ENCODE measurements at regions of chr12 and their contacts with region 1.

Region 1: DNA sequence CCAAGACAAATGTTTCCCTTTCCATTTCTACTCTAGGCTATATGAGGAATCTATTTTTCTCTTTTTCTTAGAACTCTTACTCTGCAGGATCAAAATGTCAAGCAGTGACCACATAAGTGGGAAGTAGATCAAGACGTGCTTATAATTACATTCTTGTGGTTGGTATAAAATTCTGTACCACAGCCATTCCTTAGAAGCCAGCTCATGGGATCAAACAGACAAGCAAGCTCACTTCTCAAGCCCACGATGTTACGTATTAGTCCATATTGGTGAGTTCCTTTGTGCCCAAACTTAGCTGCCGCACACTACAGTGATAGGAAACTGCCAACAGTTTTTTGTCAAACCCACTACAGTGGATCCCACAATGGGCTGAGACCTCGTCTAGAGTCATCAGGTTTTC is 53.4 kb downstream of the IFNG start:
- DNase-seq: no peak
- H3K4me3 Mint-ChIP-seq: no peak overlapping the region
- H3K27ac Mint-ChIP-seq: no peak overlapping the region
- H3K4me1 Mint-ChIP-seq: peaks cover 9% of the 10 kb centered on the region
- H3K27me3 Mint-ChIP-seq: peaks cover 6% of the 10 kb centered on the region

Region 2: DNA sequence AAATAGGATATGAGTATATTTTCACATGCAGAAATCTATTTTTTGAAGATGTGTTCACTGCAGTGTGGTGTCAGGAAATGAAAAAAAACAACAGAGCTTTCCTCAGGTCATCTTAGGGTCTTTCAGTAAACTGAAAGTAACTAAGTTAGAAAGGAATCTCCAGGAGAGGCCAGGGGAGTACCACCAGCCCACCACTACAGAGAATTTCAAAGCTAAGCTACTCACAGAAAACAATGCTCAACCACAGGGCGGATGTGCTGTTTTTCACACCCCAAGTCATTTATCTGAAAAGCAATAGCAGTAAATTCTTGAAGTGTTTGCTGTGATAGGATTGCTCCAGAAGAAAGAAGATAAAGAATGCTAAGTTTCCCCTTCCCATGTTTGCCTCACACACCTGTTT is 25.6 kb before region 1 on chr12:
- intact Hi-C with region 1: loop called (anchors 1 kb)
- DNase-seq: peak; percentile 79
- H3K4me3 Mint-ChIP-seq: peak overlapping the region; percentile 59
- H3K27ac Mint-ChIP-seq: peak overlapping the region; percentile 84
- H3K4me1 Mint-ChIP-seq: peaks cover 34% of the 10 kb centered on the region
- H3K27me3 Mint-ChIP-seq: no peaks in the 10 kb centered on the region

Measured in activated CD4-positive, alpha-beta T cell treated with anti-CD3 and anti-CD28 coated beads, Interleukin-2, amount 10 ng/mL, durations not matched to agents 24 days and 14 days (primary cell).